ENCODE measurements at regions of chrX and their contacts with region 1.

Region 1: DNA sequence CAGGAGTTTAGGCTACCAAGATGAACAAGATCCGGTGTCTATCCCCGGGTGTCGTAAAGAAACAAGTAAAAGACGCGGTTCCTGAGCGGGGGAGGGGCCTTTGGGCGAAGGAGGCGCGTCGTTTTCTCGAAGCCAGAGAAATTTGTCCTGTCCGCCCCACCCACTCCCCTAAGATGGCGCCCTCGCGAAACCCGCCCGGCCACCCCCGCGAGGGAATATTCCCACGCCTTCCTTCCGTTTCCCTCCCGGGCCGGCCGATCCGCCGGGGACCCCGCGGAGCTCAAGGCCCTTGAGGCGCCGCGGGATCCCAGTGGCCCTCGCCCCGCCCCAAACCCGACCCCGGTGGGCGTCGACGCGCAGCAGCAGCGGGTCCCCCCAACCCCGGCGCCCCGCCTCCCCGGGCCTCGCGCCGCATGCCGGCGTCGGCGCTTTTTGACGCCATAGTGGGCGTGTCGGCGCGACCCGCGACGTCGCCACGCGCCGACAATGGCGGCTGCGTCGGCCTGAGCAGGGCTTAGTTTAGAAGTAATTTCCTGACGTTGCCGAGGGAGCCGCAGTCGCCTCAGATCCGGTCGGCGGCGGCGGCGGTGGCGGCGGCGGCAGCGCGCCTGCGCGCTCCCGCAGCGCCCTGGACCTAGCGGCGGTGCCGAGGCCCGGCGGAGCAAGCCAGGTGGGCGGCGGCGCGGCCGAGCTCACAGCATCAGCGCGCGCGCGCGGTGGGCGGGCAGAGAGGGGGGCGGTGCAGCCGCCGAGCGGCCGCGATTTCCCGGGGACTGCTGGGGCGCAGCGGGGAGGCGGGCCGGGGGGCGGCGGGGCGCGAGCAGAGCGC is at the start of gene HTATSF1:
- DNase-seq: peak; percentile 82
- H3K4me3 ChIP-seq: peak within 1 kb of the TSS; percentile 72 to 80 (median 74)
- H3K27ac ChIP-seq: peak within 1 kb of the TSS; percentile 85
- H3K4me1 ChIP-seq: no peaks in the 10 kb centered on the region
- H3K27me3 ChIP-seq: no peaks in the 10 kb centered on the region
- CTCF ChIP-seq: no peak
- total RNA-seq, gene HTATSF1: 18.2 to 26.1 TPM

Region 2: DNA sequence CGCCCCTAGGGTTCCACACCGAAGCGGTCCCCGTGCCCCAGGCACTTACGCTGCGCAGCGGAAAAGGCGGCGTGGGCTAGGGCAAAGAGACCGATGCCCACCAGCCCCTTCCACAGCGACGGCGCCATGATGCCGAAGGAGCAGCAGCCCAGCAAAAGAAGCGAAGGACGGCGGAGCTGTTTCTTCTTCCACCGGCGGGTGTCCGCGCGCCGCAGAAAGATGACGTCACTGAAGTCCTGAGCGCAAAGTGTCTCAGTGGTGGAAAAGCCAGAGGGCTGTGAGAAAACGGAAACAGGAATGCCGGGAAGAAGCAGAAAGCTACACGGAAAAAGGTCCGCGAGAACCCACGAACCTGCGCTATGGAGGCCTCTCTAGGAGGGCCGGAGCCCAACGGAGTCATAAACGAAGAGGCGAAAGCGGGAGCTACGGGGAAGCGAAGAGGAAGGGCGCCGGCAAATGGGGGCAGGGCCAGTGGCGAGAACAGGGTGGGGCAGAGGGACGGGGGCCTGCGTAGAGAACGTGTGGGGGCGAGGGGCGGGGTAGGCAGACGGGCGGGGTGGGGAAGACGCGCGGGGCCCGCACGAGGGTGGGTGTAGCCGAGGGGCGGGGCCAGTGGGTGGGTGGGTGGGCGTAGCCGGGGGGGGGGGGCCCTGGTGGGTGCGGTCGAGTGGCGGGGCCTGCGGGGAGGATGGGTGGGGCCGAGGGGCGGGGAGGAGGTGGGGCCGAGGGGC is 523.3 kb before region 1 on chrX and contains the start of gene MMGT1:
- CTCF ChIA-PET with region 1: no interaction called
- dilution Hi-C with region 1: no loop called
- in situ Hi-C with region 1: no loop called
- intact Hi-C with region 1: loop called (anchors 5 kb)
- DNase-seq: peak; percentile 77
- H3K4me3 ChIP-seq: peak within 1 kb of the TSS; percentile 56 to 83 (median 58)
- H3K27ac ChIP-seq: peak within 1 kb of the TSS; percentile 92
- H3K4me1 ChIP-seq: no peaks in the 10 kb centered on the region
- H3K27me3 ChIP-seq: no peaks in the 10 kb centered on the region
- CTCF ChIP-seq: peak in 1 of 2 donors; percentile 7
- total RNA-seq, gene MMGT1: 24.7 to 28.3 TPM

Region 3: DNA sequence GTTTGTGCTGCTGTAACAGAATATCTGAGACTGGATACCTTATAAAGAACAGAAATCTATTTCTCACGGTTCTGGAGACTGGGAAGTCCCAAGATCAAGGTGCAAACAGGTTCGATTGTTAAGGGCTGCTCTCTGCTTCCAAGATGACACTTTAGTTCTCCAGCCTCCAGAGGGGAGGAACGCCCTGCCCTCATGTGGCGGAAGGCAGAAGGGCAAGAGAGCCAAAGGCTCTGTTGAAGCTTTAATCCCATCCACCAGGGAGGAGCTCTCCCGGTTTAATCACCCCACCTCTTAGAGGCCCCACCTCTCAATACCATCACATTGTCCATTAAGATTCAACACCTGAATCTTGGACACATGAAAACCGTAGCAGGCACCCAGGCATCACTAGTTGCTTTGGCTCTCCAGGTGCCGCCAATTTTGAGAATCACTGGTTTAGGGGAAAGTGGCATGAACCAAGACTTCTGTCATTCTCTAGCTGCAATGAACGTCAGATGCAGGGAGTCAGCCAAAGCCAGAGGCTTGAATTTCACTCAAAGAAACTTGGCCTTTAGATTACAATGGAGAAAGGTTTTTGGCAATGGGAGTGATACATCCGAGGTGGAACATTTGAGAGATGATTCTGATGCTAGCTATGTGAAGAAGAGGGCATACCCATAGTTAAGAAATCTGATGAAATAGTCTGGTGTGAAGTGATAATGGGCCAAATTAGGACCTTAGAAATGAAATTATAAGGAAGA is 334.0 kb before region 1 on chrX:
- CTCF ChIA-PET with region 1: no interaction called
- dilution Hi-C with region 1: no loop called
- in situ Hi-C with region 1: no loop called
- intact Hi-C with region 1: loop called (anchors 10 kb)
- DNase-seq: peak; percentile 45
- H3K4me3 ChIP-seq: no peak overlapping the region
- H3K27ac ChIP-seq: no peak overlapping the region
- H3K4me1 ChIP-seq: no peaks in the 10 kb centered on the region
- H3K27me3 ChIP-seq: peaks cover 3% of the 10 kb centered on the region
- CTCF ChIP-seq: peak; percentile 66 to 86

Region 4: DNA sequence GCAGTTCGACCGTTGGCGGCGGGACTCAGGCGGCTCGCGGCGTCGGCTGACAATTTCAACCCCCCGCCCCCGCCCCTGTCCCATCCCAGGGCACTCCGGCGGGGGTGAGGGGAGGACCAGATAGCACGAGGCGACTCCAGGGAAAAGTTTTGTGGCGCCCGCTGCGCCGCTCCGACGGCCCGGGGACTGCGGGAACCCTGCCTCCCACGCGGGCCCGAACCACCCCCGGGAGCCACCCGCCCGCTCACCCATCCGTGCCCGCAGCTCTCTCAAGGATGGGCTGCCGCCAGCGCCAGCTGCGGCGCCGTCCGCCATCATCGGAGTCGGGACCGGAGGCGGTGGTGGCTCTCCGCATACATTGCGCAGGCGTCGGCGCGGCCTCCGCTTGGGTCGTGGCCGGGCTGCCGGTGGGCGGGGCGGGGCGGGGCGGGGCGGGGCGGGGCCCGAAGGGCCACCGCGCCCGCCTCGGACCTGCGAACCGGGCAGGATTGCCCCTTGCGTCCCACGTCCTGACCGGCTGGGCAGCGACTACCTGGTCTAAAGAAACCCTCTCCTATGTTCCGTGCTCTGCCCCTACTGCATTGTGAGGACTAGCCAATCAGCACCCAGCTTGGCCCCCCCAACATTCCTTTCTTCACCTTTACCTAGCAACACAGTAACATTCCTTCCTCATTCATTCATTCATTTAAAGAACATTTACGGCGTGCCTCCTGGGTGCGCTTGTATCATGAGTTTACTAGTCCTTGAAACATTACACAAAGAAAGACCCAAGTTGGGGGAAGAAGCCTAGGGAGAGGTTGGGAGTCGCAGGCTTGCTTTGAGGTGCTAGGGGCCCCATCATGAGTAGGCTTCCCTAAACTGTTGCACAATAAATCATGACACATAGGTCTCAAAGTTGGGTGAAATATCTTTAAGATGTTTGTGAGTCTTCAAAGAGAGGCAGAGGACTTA is 245.7 kb before region 1 on chrX and contains the start of gene MAP7D3:
- CTCF ChIA-PET with region 1: no interaction called
- dilution Hi-C with region 1: no loop called
- in situ Hi-C with region 1: loop called in 1 of 2 experiments (anchors 25 kb)
- intact Hi-C with region 1: loop called (anchors 5 kb)
- DNase-seq: peak; percentile 57
- H3K4me3 ChIP-seq: peak within 1 kb of the TSS; percentile 35 to 63 (median 62)
- H3K27ac ChIP-seq: peak within 1 kb of the TSS; percentile 67
- H3K4me1 ChIP-seq: peaks cover 4% of the 10 kb centered on the region
- H3K27me3 ChIP-seq: no peaks in the 10 kb centered on the region
- CTCF ChIP-seq: no peak
- total RNA-seq, gene MAP7D3: 11.7 to 14.6 TPM

Region 5: DNA sequence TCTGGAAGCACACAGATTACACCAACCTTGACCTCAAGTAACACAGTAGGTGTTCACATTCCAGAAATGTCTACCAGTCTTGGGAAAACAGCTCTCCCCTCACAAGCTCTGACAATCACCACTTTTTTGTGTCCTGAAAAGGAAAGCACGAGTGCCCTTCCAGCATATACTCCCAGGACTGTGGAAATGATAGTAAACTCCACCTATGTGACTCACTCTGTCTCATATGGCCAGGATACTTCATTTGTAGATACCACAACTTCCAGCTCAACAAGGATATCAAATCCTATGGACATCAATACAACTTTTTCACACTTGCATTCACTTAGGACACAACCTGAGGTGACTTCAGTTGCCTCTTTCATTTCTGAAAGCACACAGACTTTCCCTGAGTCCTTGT is 149.3 kb before region 1 on chrX:
- CTCF ChIA-PET with region 1: no interaction called
- dilution Hi-C with region 1: no loop called
- in situ Hi-C with region 1: no loop called
- intact Hi-C with region 1: loop called (anchors 5 kb)
- DNase-seq: peak; percentile 31
- H3K4me3 ChIP-seq: no peak overlapping the region
- H3K27ac ChIP-seq: no peak overlapping the region
- H3K4me1 ChIP-seq: peaks cover 18% of the 10 kb centered on the region
- H3K27me3 ChIP-seq: no peaks in the 10 kb centered on the region
- CTCF ChIP-seq: no peak

Region 6: DNA sequence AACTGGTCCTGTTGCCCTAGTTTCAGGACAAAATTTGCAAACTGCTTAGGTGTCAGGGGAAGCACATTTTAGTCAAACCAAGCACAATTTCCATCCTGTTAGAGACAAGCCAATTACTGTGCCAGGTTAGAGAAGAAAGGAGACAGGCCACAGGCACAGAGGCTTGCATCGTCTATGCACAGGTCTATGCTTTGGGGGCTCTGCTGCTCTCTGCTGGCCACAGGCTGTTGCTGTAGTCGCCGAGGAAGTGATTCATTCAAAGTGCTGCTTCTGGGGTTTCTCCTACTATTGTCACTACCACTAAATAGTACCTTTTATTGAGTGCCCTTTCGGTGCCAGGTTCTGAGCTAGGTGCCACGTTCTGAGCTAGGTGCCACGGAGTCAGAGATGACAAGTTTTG is 80.6 kb after region 1 on chrX:
- CTCF ChIA-PET with region 1: no interaction called
- dilution Hi-C with region 1: no loop called
- in situ Hi-C with region 1: no loop called
- intact Hi-C with region 1: loop called (anchors 5 kb)
- DNase-seq: peak; percentile 37
- H3K4me3 ChIP-seq: no peak overlapping the region
- H3K27ac ChIP-seq: no peak overlapping the region
- H3K4me1 ChIP-seq: no peaks in the 10 kb centered on the region
- H3K27me3 ChIP-seq: no peaks in the 10 kb centered on the region
- CTCF ChIP-seq: peak; percentile 68 to 79